ENCODE measurements at regions of chr6 and their contacts with region 1.

Region 1: GRCh38 chr6:158972241-158973233 is 27.5 kb downstream of the RSPH3 start:
- DNase-seq: peak in 4 of 5 donors; percentile 57 to 66 (median 60)
- H3K4me3 ChIP-seq: no peak overlapping the region
- H3K4me3 Mint-ChIP-seq: no peak overlapping the region
- H3K27ac ChIP-seq: no peak overlapping the region
- H3K27ac Mint-ChIP-seq: peak overlapping the region in 2 of 7 donors; percentile 31 to 47
- H3K4me1 ChIP-seq: no peaks in the 10 kb centered on the region
- H3K4me1 Mint-ChIP-seq: peaks cover 0 to 3% (median 0%) of the 10 kb centered on the region in 4 donors
- H3K27me3 ChIP-seq: no peaks in the 10 kb centered on the region
- H3K27me3 Mint-ChIP-seq: no peaks in the 10 kb centered on the region

Region 2: DNA sequence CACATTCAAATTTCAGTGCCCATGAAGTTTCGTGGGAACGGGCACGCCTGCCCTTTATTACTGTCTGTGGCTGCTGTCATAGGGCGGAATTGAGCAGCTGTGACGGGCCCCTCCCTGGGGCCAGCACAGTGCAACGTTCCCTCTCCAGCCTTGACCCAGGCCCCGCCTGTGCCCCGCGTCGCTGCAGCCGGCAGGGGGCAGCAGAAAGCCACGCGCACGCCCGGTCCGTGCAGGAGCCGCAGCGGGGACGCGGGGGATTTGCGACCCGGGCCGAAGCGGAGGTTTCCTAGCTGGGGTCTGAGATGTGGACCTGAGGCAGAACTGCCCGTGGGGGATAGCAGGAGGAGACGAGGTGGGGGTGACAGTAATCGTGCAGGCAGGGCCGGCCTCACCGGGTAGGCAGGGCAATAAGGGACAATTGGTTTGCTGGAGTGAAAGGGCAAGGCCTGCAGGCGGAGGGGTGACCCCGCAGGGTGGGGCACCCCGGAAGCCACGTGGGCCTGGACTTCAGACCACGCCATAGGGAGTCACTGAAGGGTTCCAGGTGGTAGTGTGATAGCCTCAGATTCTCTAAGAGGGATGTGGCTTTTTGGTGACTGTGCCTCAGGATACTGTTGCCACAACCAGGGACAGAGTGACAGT is 268.2 kb before region 1 on chr6:
- CTCF ChIA-PET with region 1: interaction called, 132 read pairs
- POLR2A ChIA-PET with region 1: interaction called, 4 read pairs
- intact Hi-C with region 1: loop called (anchors 1 kb)
- DNase-seq: peak; percentile 67 to 82 (median 72)
- H3K4me3 ChIP-seq: peak overlapping the region; percentile 39 to 57
- H3K4me3 Mint-ChIP-seq: peak overlapping the region; percentile 82 to 89 (median 83)
- H3K27ac ChIP-seq: no peak overlapping the region
- H3K27ac Mint-ChIP-seq: peak overlapping the region; percentile 41 to 90 (median 79)
- H3K4me1 ChIP-seq: peaks cover 10% of the 10 kb centered on the region
- H3K4me1 Mint-ChIP-seq: peaks cover 9 to 21% (median 15%) of the 10 kb centered on the region in 4 donors
- H3K27me3 ChIP-seq: no peaks in the 10 kb centered on the region
- H3K27me3 Mint-ChIP-seq: no peaks in the 10 kb centered on the region

Region 3: GRCh38 chr6:158958504-158959386 is 13.8 kb before region 1 on chr6:
- CTCF ChIA-PET with region 1: interaction called, 14 read pairs
- POLR2A ChIA-PET with region 1: no interaction called
- intact Hi-C with region 1: no loop called
- DNase-seq: peak in 4 of 5 donors; percentile 13 to 26 (median 24)
- H3K4me3 ChIP-seq: no peak overlapping the region
- H3K4me3 Mint-ChIP-seq: no peak overlapping the region
- H3K27ac ChIP-seq: no peak overlapping the region
- H3K27ac Mint-ChIP-seq: peak overlapping the region in 3 of 7 donors; percentile 1 to 59 (median 52)
- H3K4me1 ChIP-seq: no peaks in the 10 kb centered on the region
- H3K4me1 Mint-ChIP-seq: peaks cover 0 to 13% (median 0%) of the 10 kb centered on the region in 4 donors
- H3K27me3 ChIP-seq: no peaks in the 10 kb centered on the region
- H3K27me3 Mint-ChIP-seq: no peaks in the 10 kb centered on the region

Region 4: GRCh38 chr6:159110013-159110412 is 137.5 kb after region 1 on chr6:
- CTCF ChIA-PET with region 1: interaction called, 12 read pairs
- POLR2A ChIA-PET with region 1: no interaction called
- intact Hi-C with region 1: no loop called
- DNase-seq: peak; percentile 34 to 48 (median 40)
- H3K4me3 ChIP-seq: no peak overlapping the region
- H3K4me3 Mint-ChIP-seq: peak overlapping the region in 4 of 8 donors; percentile 26 to 60 (median 50)
- H3K27ac ChIP-seq: peak overlapping the region; percentile 90
- H3K27ac Mint-ChIP-seq: peak overlapping the region; percentile 88 to 94 (median 92)
- H3K4me1 ChIP-seq: peaks cover 81% of the 10 kb centered on the region
- H3K4me1 Mint-ChIP-seq: peaks cover 53 to 79% (median 63%) of the 10 kb centered on the region in 4 donors
- H3K27me3 ChIP-seq: no peaks in the 10 kb centered on the region
- H3K27me3 Mint-ChIP-seq: no peaks in the 10 kb centered on the region

Measured in CD4-positive, alpha-beta memory T cell (primary cell).